Endothelial cell of umbilical vein (primary cell): ENCODE measurements at regions of chr14 and their contacts with region 1.

Region 1: GRCh38 chr14:91138511-91139359 is 24.9 kb downstream of the DGLUCY start:
- DNase-seq: peak; percentile 82
- H3K4me3 ChIP-seq: no peak overlapping the region
- H3K27ac ChIP-seq: no peak overlapping the region
- H3K4me1 ChIP-seq: peaks cover 22% of the 10 kb centered on the region
- H3K27me3 ChIP-seq: no peaks in the 10 kb centered on the region
- CTCF ChIP-seq: peak; percentile 45 to 52
- POLR2A ChIP-seq: no peak

Region 2: DNA sequence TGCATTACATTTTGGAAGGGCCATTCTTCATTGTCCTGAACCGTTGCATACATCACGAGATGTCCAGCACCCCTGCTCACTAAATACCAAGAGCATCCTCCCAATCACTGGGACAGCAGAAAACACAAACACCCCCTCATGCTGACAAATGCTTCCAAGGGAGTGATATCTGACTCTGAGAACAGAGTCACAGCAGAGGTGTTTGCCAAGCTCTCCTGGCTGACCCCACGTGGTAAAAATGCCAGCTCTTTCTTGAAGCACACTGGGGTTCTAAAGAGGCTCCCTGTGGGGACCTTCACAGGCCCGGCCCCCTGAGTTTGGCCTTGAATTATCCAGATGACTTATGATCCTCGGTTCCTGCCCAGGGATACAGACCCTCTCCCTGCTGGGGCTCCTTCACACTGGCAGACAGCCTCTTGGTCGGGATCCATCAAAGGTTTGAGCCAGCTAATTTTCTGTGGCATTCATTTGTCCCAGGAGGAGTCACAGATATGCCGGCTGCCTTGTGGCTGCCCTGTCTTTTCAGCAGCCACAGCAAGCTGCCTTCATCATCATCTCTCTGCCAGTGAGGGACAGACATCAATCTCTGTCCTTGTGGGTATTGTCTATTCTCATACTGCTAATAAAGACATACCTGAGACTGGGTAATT is 925.5 kb before region 1 on chr14:
- CTCF ChIA-PET with region 1: no interaction called
- POLR2A ChIA-PET with region 1: no interaction called
- dilution Hi-C with region 1: no loop called
- intact Hi-C with region 1: no loop called
- DNase-seq: no peak
- H3K4me3 ChIP-seq: no peak overlapping the region
- H3K27ac ChIP-seq: no peak overlapping the region
- H3K4me1 ChIP-seq: no peaks in the 10 kb centered on the region
- H3K27me3 ChIP-seq: no peaks in the 10 kb centered on the region
- CTCF ChIP-seq: no peak
- POLR2A ChIP-seq: no peak

Region 3: DNA sequence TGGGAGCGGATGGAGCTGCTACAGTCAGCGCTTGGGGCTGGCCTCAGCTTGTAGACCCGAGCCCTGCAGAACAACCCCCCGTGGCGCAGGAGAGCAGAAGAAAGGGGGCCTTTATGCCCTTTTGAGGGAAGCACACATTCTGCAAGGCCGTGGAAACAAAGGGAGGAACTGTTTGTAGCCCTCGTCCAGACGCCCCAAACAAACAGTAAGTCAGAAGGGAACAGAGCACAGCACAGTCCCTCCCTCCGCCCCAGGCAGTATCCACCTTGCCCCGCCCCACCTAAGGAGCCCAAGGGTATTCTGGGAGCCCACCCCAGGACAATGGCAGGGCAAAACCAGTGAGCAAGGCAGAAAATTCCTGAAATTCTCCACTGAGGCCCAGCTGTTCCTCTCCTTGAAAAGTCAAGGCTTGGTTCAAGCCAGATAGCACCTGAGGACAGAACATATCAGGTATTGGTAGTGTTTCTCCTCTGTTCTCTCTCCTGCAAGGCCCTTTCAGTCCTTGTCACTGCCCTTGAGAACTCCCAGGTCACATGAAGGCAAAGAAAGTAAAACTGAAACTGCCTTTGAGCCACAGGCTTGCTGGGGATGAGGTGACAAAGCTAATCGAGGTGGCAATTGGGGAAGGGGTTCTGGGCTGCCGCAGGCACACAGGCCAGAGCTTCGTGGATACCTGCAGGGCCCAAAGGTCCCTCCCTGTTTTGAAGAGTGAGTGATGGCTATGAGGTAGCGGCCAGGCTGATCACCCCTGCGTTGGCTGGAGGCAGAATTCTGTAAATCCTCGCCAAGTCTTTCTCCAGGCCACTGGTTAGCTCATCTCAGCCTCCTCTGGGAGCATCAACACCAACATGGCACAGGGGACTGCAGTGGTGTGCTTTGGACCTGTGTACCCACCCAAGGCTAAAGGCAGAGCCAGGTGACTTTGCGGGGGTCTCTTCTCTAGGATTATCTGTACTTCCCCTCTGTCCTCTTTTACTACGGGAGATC is 24.4 kb before region 1 on chr14:
- CTCF ChIA-PET with region 1: interaction called, 26 read pairs
- POLR2A ChIA-PET with region 1: no interaction called
- dilution Hi-C with region 1: no loop called
- intact Hi-C with region 1: no loop called
- DNase-seq: peak; percentile 91
- H3K4me3 ChIP-seq: peak overlapping the region; percentile 25 to 66 (median 31)
- H3K27ac ChIP-seq: peak overlapping the region; percentile 79
- H3K4me1 ChIP-seq: peaks cover 42% of the 10 kb centered on the region
- H3K27me3 ChIP-seq: no peaks in the 10 kb centered on the region
- CTCF ChIP-seq: no peak
- POLR2A ChIP-seq: peak; percentile 68